ENCODE measurements at regions of chr17 and their contacts with region 1.

Region 1: DNA sequence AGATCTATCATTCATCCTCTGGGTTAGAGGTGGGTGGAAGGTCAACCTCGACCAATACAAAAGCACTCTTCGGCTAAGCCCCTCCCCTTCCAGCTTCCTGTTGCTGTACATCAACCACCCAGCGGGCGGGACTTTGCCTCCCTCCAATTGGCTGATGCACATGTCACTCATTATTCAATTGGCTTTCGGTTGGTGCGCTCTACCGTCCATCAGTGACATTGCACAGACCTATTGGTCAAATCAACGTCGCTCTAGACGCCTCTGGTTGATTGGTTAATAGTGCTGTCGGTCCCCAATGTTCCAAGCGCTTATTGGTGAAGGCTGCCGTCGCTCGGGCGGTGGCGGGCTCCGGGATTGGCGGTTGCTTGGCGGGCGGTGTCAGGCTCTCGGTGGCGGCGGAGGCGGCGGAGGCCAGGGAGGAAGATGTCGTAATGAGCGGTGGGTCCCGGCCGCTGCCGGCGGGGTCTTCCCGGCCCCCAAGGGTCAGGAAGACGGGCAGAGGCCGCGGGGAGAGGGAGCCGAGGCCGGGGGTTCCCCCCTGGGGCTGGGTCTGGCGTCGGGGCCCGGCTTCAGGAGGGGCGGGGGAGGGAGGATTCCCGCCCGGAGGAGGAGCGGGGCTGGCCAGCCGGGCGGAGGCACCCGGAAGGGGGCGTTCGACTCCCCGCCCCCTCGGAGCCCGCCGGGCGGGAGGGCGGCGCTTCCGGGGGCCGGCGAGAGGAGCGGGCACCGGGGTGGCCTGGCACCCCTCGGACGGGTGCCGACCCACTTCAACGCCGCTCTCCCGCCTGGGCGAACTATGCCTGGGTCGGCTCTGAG is at the start of gene SP2:
- DNase-seq: peak; percentile 97

Region 2: GRCh38 chr17:47239619-47240374 is 656.3 kb before region 1 on chr17:
- CTCF ChIA-PET with region 1: no interaction called
- POLR2A ChIA-PET with region 1: no interaction called
- DNase-seq: no peak

Region 3: DNA sequence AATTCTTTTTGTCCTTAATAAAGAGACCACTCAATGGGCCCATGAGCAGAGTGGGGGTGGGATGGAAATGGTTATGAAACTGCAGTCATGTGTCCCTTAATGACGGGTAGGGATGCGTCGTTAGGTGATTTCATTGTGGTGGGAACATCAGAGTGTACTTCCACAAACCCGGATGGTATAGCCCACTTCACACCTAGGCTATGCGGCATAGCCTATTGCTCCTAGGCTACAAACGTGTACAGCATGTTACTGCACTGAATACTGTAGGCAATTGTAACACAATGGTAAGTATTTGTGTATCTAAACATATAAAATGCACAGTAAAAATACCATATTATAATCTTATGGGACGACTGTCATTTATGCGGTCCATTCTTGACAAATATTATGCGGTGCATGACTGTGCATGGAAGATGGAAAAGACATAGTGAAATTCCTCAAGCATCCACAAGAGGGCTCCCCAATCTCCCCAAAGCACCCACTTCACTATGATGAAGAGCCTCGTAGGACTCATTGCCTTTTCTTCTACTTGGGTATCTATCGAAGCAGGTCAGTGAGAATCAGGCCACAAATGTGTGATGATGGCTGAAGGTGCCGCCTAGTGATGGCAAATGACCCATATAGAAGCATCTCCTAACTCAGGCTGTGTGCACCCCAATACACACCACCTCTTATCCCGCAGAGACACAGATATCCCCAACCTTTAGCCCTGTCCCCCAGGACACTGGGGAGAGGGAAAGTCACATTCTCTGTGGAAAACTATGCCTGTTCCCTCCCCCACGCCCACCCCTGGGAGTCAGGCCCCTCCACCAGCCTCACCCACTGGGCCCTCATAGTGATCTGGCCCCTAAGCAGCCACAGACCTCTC is 119.5 kb before region 1 on chr17:
- CTCF ChIA-PET with region 1: no interaction called
- POLR2A ChIA-PET with region 1: no interaction called
- DNase-seq: peak; percentile 69

Region 4: GRCh38 chr17:47821424-47822391 is 74.4 kb before region 1 on chr17 and contains the start of gene OSBPL7:
- CTCF ChIA-PET with region 1: no interaction called
- POLR2A ChIA-PET with region 1: interaction called, 12 read pairs
- DNase-seq: peak; percentile 56

Region 5: GRCh38 chr17:47831003-47831933 is 64.8 kb before region 1 on chr17 and contains the starts of genes LRRC46 and MRPL10:
- CTCF ChIA-PET with region 1: no interaction called
- POLR2A ChIA-PET with region 1: interaction called, 22 read pairs
- DNase-seq: peak; percentile 99

Region 6: DNA sequence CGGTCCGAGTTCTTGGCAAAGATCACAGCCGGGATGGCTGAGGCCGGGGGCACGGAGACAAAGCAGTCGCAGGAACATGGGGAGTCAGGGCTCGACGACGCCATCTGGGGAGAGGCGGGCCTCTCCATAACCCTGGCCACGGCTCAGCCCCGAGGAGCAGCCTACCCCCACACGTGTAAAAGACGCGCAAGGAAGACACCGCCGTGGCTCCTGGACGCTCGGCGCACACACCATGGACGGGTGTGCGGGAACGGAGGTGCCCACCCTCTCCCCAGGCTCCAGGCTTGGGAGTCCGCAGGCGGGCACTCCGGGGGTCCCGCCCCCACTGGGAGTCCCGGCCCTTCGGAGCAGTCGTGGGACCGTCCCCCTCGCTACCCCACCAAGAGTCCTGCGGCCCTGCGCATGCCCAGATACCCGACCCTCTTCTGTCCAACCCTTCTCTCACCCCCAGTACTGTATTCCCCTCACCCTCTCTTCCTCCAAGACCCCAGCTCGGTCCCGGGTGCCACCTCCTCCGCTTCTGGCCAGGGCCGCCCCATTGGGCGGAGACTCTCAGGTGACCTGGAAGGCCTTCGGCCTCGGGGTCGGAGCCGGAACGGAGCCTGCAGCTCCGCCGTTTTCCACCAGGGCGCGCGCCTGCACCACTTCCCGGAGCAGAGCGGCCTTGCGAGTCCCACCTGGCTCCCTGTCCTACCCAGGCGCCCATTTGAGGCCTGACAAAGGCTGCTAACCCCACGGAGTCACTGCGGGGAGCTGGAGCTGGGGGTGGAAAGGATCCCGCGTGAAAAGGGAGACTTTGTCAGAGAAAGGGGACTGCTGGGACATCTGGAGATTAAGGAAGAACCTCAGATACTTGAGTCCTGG is 55.1 kb before region 1 on chr17 and contains the start of gene SCRN2:
- CTCF ChIA-PET with region 1: interaction called, 355 read pairs
- POLR2A ChIA-PET with region 1: interaction called, 79 read pairs
- DNase-seq: peak; percentile 90

Region 7: GRCh38 chr17:47850692-47851573 is 45.1 kb before region 1 on chr17 and contains the start of gene SP6:
- CTCF ChIA-PET with region 1: interaction called, 355 read pairs
- POLR2A ChIA-PET with region 1: interaction called, 19 read pairs
- DNase-seq: peak; percentile 74

Region 8: DNA sequence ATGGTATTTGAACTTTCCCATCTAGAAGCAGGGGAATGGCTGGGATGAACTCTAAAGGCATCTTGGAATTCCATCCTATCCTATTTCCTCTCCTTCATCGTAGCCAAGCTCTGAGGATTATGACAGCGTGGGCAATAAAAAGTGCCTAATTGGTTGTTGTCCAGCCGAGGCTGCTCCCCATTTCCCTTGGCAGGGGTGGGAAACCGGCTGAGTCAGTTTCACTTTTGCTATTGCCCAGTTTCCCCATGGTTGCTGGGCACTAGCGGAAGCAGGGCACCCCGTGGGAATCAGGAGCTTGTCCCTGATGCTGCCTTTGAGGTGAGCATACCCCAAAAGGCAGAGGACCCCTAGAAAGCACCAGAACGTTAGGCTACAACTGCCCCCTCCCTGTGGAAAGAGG is 13.8 kb before region 1 on chr17:
- CTCF ChIA-PET with region 1: interaction called, 5 read pairs
- POLR2A ChIA-PET with region 1: interaction called, 12 read pairs
- DNase-seq: no peak

Region 9: GRCh38 chr17:47941236-47941994 is 45.4 kb after region 1 on chr17 and contains the start of gene PNPO:
- CTCF ChIA-PET with region 1: interaction called, 3 read pairs
- POLR2A ChIA-PET with region 1: interaction called, 25 read pairs
- DNase-seq: peak; percentile 97

Region 10: GRCh38 chr17:48002266-48002915 is 106.3 kb after region 1 on chr17:
- CTCF ChIA-PET with region 1: no interaction called
- POLR2A ChIA-PET with region 1: no interaction called
- DNase-seq: no peak